ENCODE measurements at regions of chr2 and their contacts with region 1.

Region 1: GRCh38 chr2:117994729-117995128 is 19.1 kb downstream of the CCDC93 start:
- DNase-seq: no peak
- H3K4me3 ChIP-seq: no peak overlapping the region
- H3K27ac ChIP-seq: no peak overlapping the region
- H3K4me1 ChIP-seq: no peaks in the 10 kb centered on the region
- H3K27me3 ChIP-seq: no peaks in the 10 kb centered on the region
- CTCF ChIP-seq: no peak

Region 2: GRCh38 chr2:117933884-117934354 is 60.8 kb before region 1 on chr2:
- CTCF ChIA-PET with region 1: no interaction called
- dilution Hi-C with region 1: loop called (anchors 5 kb)
- in situ Hi-C with region 1: no loop called
- intact Hi-C with region 1: no loop called
- DNase-seq: no peak
- H3K4me3 ChIP-seq: no peak overlapping the region
- H3K27ac ChIP-seq: no peak overlapping the region
- H3K4me1 ChIP-seq: no peaks in the 10 kb centered on the region
- H3K27me3 ChIP-seq: no peaks in the 10 kb centered on the region
- CTCF ChIP-seq: no peak

Region 3: DNA sequence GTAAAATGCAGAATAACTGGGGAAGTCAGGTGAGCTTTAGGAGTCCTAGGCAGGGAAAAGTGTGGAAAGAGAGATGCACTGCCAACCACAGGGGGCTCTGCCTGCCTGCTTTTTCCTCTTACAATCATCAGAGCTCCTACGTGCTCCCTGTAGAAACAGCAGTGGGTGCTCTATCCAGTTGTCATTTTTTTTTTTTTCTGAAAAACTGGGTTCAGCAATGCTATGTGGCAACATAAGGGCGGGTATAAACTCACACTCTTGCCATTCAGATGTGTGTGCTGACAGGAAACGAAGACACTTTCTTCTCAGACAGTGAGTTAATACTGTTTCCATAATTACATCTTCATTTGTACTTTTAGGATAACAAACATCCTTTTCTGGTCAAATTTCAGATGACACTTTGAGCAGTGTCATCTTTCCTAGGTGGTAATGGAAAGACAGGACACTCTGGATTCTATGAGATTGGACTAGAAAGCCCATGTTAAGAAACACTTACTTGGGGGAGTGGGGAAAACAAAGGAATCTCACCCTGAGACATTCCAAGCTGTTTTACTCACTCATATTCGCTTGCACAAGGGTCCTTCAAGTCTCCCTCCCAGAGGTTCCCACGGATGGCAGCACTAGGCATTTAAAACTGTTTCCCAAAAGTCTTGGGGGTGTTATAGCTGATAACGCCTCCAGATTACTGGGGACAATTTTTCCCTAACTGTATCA is 22.1 kb before region 1 on chr2:
- CTCF ChIA-PET with region 1: no interaction called
- dilution Hi-C with region 1: no loop called
- in situ Hi-C with region 1: no loop called
- intact Hi-C with region 1: no loop called
- DNase-seq: no peak
- H3K4me3 ChIP-seq: no peak overlapping the region
- H3K27ac ChIP-seq: no peak overlapping the region
- H3K4me1 ChIP-seq: no peaks in the 10 kb centered on the region
- H3K27me3 ChIP-seq: no peaks in the 10 kb centered on the region
- CTCF ChIP-seq: no peak

Region 4: GRCh38 chr2:118251427-118251826 is 256.7 kb after region 1 on chr2:
- CTCF ChIA-PET with region 1: no interaction called
- dilution Hi-C with region 1: no loop called
- in situ Hi-C with region 1: no loop called
- intact Hi-C with region 1: no loop called
- DNase-seq: no peak
- H3K4me3 ChIP-seq: no peak overlapping the region
- H3K27ac ChIP-seq: no peak overlapping the region
- H3K4me1 ChIP-seq: peaks cover 20% of the 10 kb centered on the region
- H3K27me3 ChIP-seq: no peaks in the 10 kb centered on the region
- CTCF ChIP-seq: no peak